Heart left ventricle (tissue), 16 donors: ENCODE measurements at regions of chr5 and their contacts with region 1.

Region 1: GRCh38 chr5:123511648-123512605 is at the start of gene CSNK1G3:
- DNase-seq: peak; percentile 96 to 98 (median 98)
- ATAC-seq: peak; percentile 99
- H3K4me3 ChIP-seq: peak within 1 kb of the TSS; percentile 66 to 94 (median 80)
- H3K27ac ChIP-seq: peak within 1 kb of the TSS; percentile 78 to 96 (median 92)
- H3K4me1 ChIP-seq: peaks cover 0 to 31% (median 15%) of the 10 kb centered on the region in 12 donors
- H3K27me3 ChIP-seq: no peaks in the 10 kb centered on the region
- CTCF ChIP-seq: peak in 2 of 12 donors; percentile 19 to 38
- POLR2A ChIP-seq: peak; percentile 47 to 85
- total RNA-seq, gene CSNK1G3: 19.3 to 34.3 (median 25.4) TPM

Region 2: GRCh38 chr5:123423278-123424149 is 88.4 kb before region 1 on chr5 and contains the start of gene CEP120:
- intact Hi-C with region 1: loop called in 9 of 10 experiments (anchors 1 to 10 kb)
- DNase-seq: peak; percentile 98 to 99 (median 99)
- ATAC-seq: peak; percentile 99 to 100 (median 100)
- H3K4me3 ChIP-seq: peak within 1 kb of the TSS; percentile 64 to 98 (median 88)
- H3K27ac ChIP-seq: peak within 1 kb of the TSS; percentile 79 to 96 (median 90)
- H3K4me1 ChIP-seq: peaks cover 0 to 35% (median 18%) of the 10 kb centered on the region in 12 donors
- H3K27me3 ChIP-seq: no peaks in the 10 kb centered on the region
- CTCF ChIP-seq: peak; percentile 57 to 96 (median 76)
- POLR2A ChIP-seq: peak; percentile 59 to 85
- total RNA-seq, gene CEP120: 10.3 to 16.5 (median 12.4) TPM

Region 3: DNA sequence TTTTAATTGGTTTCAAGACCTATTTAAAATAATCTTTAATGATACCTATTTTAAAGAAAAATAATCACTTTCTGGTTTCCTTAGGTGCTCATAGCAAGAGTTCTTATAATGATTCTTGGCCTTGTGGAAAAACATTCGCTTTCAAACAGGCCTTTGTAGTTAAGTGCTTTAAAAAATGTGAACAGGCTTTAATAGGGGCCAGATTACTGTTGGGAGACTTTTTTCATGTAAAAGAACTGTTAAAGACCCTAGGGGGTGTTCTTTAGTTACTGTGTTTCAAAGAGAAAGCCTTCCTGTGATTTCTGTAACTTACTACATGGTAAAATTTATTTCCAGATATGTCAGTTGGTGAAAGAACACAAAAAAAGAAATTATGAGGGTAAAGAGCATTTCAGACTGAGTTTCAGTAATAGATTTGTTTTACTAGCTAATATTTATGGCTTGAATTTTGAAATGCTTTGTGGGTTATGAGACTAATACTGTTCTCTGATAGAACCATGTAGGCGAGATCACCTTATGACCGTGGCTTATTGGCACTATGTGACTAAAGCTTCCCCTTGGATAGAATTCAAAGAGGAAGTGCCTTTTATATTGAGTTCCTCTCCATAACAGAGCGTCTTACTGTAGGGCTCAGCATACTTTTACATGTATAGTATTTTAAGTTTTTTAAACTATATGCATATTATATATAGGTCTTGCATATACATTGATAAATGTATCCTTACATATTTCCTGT is 70.8 kb after region 1 on chr5:
- intact Hi-C with region 1: loop called in 2 of 10 experiments (anchors 1 to 10 kb)
- DNase-seq: no peak
- ATAC-seq: peak; percentile 15 to 67 (median 58)
- H3K4me3 ChIP-seq: no peak overlapping the region
- H3K27ac ChIP-seq: peak overlapping the region in 2 of 12 donors; percentile 11 to 29
- H3K4me1 ChIP-seq: peaks cover 0 to 27% (median 7%) of the 10 kb centered on the region in 12 donors
- H3K27me3 ChIP-seq: no peaks in the 10 kb centered on the region
- CTCF ChIP-seq: no peak
- POLR2A ChIP-seq: no peak

Region 4: DNA sequence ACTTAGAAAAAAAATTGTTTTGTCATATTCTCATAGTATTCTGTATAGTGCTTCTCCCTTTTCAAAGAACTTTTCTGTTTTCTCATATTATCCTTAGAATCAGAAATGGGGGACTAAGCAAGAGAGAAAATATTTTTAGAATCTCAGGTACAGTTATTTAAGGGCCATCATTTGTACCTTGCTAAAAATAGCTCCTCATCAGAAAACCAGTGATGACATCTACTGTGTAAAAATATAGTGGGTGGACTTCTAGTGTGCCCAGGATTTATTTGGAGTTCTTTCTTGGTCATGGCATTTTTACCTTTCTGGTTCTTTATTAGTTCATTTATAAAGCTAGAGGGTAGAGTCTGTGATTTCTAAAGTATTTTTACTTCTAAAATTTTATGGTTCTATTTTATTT is 82.5 kb after region 1 on chr5:
- intact Hi-C with region 1: loop called in 2 of 10 experiments (anchors 5 to 10 kb)
- DNase-seq: no peak
- ATAC-seq: peak; percentile 60 to 81 (median 66)
- H3K4me3 ChIP-seq: no peak overlapping the region
- H3K27ac ChIP-seq: no peak overlapping the region
- H3K4me1 ChIP-seq: peaks cover 0 to 5% (median 0%) of the 10 kb centered on the region in 12 donors
- H3K27me3 ChIP-seq: no peaks in the 10 kb centered on the region
- CTCF ChIP-seq: no peak
- POLR2A ChIP-seq: no peak

Region 5: DNA sequence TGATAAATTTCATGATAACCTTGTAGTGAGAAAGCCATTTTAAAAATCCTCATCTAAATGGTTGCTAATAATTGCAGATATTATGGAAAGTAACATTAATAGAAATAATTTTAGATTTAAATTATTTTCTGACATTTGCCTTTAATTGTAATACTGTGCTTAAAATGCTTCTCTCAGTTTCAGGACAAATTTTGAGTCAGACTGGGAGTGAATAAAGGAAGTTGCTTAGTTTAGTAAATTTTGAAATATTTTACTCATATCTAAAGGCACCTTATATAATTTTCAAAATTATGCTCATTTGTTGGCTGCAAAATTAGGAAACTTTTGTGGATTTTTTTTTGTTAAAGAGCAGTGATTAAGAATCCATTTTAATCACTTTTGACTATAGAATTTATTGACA is 93.9 kb after region 1 on chr5:
- intact Hi-C with region 1: loop called in 6 of 10 experiments (anchors 5 to 10 kb)
- DNase-seq: no peak
- ATAC-seq: no peak
- H3K4me3 ChIP-seq: no peak overlapping the region
- H3K27ac ChIP-seq: no peak overlapping the region
- H3K4me1 ChIP-seq: peaks cover 0 to 5% (median 0%) of the 10 kb centered on the region in 12 donors
- H3K27me3 ChIP-seq: no peaks in the 10 kb centered on the region
- CTCF ChIP-seq: no peak
- POLR2A ChIP-seq: no peak

Region 6: DNA sequence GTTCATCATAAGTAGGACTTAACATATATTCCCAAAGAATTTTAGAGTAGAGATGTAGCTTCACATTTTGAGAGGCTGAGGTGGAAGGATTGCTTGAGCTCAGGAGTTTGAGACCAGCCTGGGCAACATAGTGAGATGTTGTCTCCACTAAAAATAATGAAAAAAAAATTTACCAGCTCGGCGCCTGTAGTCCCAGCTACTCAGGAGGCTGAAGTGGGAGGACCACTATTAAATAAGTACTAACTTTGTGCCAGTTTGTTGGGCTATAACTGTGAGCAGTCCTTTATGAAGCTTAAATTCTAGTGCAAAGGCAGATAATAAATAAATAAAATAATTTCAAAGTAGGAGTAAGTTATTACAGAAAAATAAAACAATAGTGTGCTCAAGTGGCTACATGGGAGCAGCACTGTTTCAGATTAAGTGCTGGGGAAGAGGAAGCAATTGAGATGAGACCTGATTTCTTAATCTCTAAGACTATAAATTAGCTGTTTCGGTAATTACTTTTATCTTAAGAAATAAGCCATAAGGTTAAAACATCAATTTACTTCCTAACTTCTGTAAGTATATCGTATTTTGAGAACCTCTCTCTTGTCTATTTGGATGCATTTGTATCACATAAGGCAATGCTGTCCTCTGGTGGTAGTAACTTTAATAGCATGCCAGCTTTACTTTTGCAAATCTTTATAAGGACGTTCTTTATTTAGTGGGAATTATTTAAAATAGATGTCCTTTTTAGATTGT is 98.9 kb after region 1 on chr5:
- intact Hi-C with region 1: loop called in 5 of 10 experiments (anchors 5 to 10 kb)
- DNase-seq: no peak
- ATAC-seq: peak in 3 of 4 donors; percentile 50 to 70 (median 54)
- H3K4me3 ChIP-seq: no peak overlapping the region
- H3K27ac ChIP-seq: no peak overlapping the region
- H3K4me1 ChIP-seq: peaks cover 0 to 7% (median 0%) of the 10 kb centered on the region in 12 donors
- H3K27me3 ChIP-seq: no peaks in the 10 kb centered on the region
- CTCF ChIP-seq: peak; percentile 89 to 99 (median 96)
- POLR2A ChIP-seq: no peak